Tibial artery (tissue), 4 donors: ENCODE measurements at regions of chr1 and their contacts with region 1.

Region 1: DNA sequence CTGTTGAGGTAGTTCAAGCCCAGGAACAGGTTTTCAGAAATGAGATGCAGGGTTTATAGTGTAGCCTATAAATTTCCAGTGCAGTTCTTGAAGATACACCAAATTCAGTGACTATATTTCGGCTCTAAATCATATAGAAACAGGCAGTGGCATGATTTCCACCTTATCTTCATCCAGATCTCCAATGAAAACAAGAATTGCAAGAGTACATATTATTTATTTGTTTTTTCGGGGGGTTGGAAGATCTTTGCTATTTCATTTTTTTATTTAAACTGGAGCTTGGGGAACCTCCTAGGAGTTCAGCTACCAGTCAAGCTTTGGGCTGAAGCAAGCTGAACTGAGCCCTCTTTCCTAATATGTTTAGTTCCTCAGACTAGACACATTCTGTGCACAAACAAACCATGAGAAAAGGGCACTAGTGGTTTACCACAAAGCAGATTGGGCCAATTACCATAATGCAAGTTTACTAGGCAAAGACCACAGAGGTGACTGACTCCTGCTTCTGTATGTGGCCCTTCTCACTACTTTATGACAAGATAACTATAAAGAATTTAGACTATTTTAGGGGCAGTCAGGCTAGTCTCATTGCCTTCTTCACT is 68.5 kb downstream of the RGS2 start:
- DNase-seq: no peak
- H3K4me3 ChIP-seq: no peak overlapping the region
- H3K27ac ChIP-seq: no peak overlapping the region
- H3K4me1 ChIP-seq: peaks cover 0 to 36% (median 7%) of the 10 kb centered on the region in 4 donors
- H3K27me3 ChIP-seq: no peaks in the 10 kb centered on the region
- CTCF ChIP-seq: no peak

Region 2: GRCh38 chr1:192604979-192605620 is 272.3 kb before region 1 on chr1:
- intact Hi-C with region 1: loop called (anchors 5 kb)
- DNase-seq: no peak
- H3K4me3 ChIP-seq: no peak overlapping the region
- H3K27ac ChIP-seq: no peak overlapping the region
- H3K4me1 ChIP-seq: peaks cover 0 to 11% (median 0%) of the 10 kb centered on the region in 4 donors
- H3K27me3 ChIP-seq: no peaks in the 10 kb centered on the region
- CTCF ChIP-seq: no peak